ENCODE measurements at regions of chr16 and their contacts with region 1.

Region 1: DNA sequence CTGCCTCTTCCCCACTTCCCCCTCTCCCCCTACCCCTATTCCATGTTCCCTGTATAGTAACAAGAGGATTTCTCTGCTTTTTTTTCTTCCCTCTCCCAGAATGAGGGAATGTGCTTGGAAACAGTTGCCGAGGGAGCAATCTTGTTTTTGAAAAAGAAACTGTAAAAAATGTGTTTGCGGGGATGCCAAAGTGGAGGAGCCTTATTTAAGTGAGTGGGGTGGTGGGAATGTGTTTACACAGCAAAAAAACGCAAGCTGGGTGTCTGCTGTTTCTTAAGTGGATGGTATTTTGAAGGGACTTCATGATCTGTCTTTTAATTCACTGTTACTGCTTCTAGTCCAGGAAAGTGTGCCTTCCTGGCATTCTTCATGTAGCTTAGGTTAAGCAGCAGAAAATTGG is 254.4 kb downstream of the SHISA9 start:
- DNase-seq: no peak
- H3K4me3 ChIP-seq: no peak overlapping the region
- H3K27ac ChIP-seq: no peak overlapping the region
- H3K4me1 ChIP-seq: no peaks in the 10 kb centered on the region
- H3K27me3 ChIP-seq: no peaks in the 10 kb centered on the region
- CTCF ChIP-seq: no peak

Region 2: GRCh38 chr16:12951392-12951791 is 204.4 kb before region 1 on chr16:
- CTCF ChIA-PET with region 1: no interaction called
- POLR2A ChIA-PET with region 1: interaction called, 12 read pairs
- intact Hi-C with region 1: no loop called
- DNase-seq: no peak
- H3K4me3 ChIP-seq: no peak overlapping the region
- H3K27ac ChIP-seq: no peak overlapping the region
- H3K4me1 ChIP-seq: no peaks in the 10 kb centered on the region
- H3K27me3 ChIP-seq: no peaks in the 10 kb centered on the region
- CTCF ChIP-seq: no peak

Measured in A673 (cell line).